Naive thymus-derived CD8-positive, alpha-beta T cell (primary cell): ENCODE measurements at regions of chr20 and their contacts with region 1.

Region 1: GRCh38 chr20:37042986-37043972 is 52.5 kb downstream of the RBL1 start:
- DNase-seq: peak in 3 of 10 donors; percentile 49 to 56 (median 51)
- ATAC-seq: peak; percentile 76 to 77
- H3K4me3 Mint-ChIP-seq: peak overlapping the region; percentile 77 to 93 (median 88)
- H3K27ac Mint-ChIP-seq: peak overlapping the region; percentile 86 to 97 (median 92)
- H3K4me1 Mint-ChIP-seq: peaks cover 7 to 37% (median 24%) of the 10 kb centered on the region in 4 donors
- H3K27me3 Mint-ChIP-seq: no peaks in the 10 kb centered on the region

Region 2: GRCh38 chr20:37011147-37011546 is 32.1 kb before region 1 on chr20:
- POLR2A ChIA-PET with region 1: interaction called, 17 read pairs
- DNase-seq: no peak
- ATAC-seq: no peak
- H3K4me3 Mint-ChIP-seq: no peak overlapping the region
- H3K27ac Mint-ChIP-seq: peak overlapping the region in 8 of 10 donors; percentile 48 to 82 (median 64)
- H3K4me1 Mint-ChIP-seq: peaks cover 7 to 54% (median 30%) of the 10 kb centered on the region in 4 donors
- H3K27me3 Mint-ChIP-seq: no peaks in the 10 kb centered on the region

Region 3: GRCh38 chr20:37095599-37096414 is 52.5 kb after region 1 on chr20 and contains the start of gene RBL1:
- POLR2A ChIA-PET with region 1: interaction called, 10 read pairs
- DNase-seq: peak; percentile 76 to 94 (median 85)
- ATAC-seq: peak; percentile 85 to 89
- H3K4me3 Mint-ChIP-seq: peak within 1 kb of the TSS; percentile 98 to 100 (median 99)
- H3K27ac Mint-ChIP-seq: peak within 1 kb of the TSS; percentile 98 to 100 (median 99)
- H3K4me1 Mint-ChIP-seq: peaks cover 15 to 35% (median 25%) of the 10 kb centered on the region in 4 donors
- H3K27me3 Mint-ChIP-seq: peaks cover 0 to 2% (median 0%) of the 10 kb centered on the region in 5 donors
- polyA plus RNA-seq, gene RBL1: 6.2 to 7.6 (median 7.0) TPM

Region 4: GRCh38 chr20:37308086-37309050 is 265.1 kb after region 1 on chr20:
- POLR2A ChIA-PET with region 1: no interaction called
- DNase-seq: no peak
- ATAC-seq: no peak
- H3K4me3 Mint-ChIP-seq: no peak overlapping the region
- H3K27ac Mint-ChIP-seq: peak overlapping the region in 2 of 10 donors; percentile 11 to 25
- H3K4me1 Mint-ChIP-seq: peaks cover 6 to 25% (median 11%) of the 10 kb centered on the region in 4 donors
- H3K27me3 Mint-ChIP-seq: no peaks in the 10 kb centered on the region